Common myeloid progenitor, CD34-positive (primary cell): ENCODE measurements at regions of chr1 and their contacts with region 1.

Region 1: GRCh38 chr1:28208818-28209441 is 23.9 kb downstream of the DNAJC8 start:
- DNase-seq: peak; percentile 78 to 89 (median 85)
- H3K4me3 ChIP-seq: no peak overlapping the region
- H3K27ac ChIP-seq: no peak overlapping the region
- H3K4me1 ChIP-seq: peaks cover 0 to 4% (median 0%) of the 10 kb centered on the region in 4 experiments
- H3K27me3 ChIP-seq: no peaks in the 10 kb centered on the region

Region 2: DNA sequence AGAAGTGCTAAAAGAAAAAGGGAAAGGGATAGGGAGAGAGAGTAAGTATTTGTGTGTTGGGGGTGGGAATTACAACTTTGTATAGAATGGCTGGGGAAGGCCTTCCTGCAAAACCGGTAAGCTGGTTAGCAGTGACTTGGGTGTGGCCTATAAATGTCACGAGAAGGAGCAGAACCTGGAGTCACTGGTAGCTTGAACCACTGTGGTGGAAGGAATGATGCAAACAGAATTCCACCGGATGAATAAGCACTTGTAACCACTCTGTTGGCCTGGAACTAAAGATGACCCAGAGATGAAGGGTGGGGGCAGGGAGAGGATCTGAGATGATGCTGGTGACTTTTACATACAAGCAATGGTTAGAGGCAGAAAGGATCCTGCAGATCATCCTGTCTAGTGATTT is 240.2 kb before region 1 on chr1:
- CTCF ChIA-PET with region 1: no interaction called
- POLR2A ChIA-PET with region 1: no interaction called
- DNase-seq: no peak
- H3K4me3 ChIP-seq: no peak overlapping the region
- H3K27ac ChIP-seq: no peak overlapping the region
- H3K4me1 ChIP-seq: peaks cover 0 to 8% (median under 1%) of the 10 kb centered on the region in 4 experiments
- H3K27me3 ChIP-seq: no peaks in the 10 kb centered on the region

Region 3: DNA sequence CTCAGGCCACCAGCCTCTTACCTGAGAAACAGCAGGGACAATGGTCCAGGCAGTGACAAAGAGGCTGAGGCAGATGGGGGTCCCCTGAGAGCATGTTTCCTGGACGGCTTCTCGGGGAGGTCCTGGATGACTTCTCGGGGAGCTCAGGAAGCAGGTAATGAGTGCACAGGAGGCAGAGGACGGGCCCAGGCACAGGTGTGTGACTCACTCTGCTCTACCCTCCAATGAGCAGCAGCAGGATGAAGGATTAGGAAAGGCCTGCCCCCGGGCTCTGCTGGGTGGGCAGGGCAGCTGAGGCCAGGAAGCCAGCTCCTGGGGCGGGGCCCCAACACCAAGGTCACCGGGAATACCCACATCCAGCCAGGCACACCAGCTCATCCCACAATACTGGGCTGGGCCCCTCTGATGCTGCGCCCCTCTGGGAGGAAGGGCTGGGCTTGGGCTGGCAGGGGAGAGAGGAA is 15.2 kb before region 1 on chr1:
- CTCF ChIA-PET with region 1: interaction called, 33 read pairs
- POLR2A ChIA-PET with region 1: no interaction called
- DNase-seq: no peak
- H3K4me3 ChIP-seq: no peak overlapping the region
- H3K27ac ChIP-seq: no peak overlapping the region
- H3K4me1 ChIP-seq: peaks cover 0 to 32% (median 19%) of the 10 kb centered on the region in 4 experiments
- H3K27me3 ChIP-seq: no peaks in the 10 kb centered on the region

Region 4: DNA sequence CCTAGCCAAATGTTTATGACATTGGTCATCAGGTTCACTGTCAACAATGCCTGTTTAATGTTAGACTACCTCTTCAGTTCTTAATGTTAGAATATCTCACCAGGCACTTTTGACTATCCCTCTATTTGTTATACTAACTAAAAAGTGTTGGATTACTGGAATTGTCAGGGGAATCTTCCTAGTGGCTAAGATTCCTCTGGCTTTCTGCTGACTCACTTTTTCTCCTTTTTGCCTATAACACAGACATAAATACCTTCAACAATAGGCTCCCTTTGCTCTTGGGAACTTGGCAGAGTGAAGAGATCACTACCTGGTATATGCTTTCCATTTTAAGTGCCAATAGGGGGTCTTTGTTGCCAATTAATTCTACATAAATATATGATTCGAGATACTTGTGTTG is 846.2 kb after region 1 on chr1:
- CTCF ChIA-PET with region 1: no interaction called
- POLR2A ChIA-PET with region 1: no interaction called
- DNase-seq: no peak
- H3K4me3 ChIP-seq: no peak overlapping the region
- H3K27ac ChIP-seq: no peak overlapping the region
- H3K4me1 ChIP-seq: no peaks in the 10 kb centered on the region
- H3K27me3 ChIP-seq: no peaks in the 10 kb centered on the region